Activated naive CD4-positive, alpha-beta T cell treated with anti-CD3 and anti-CD28 coated beads, Interleukin-2, amount 10 ng/mL, durations not matched to agents 7 days and 5 days (primary cell): ENCODE measurements at regions of chr6 and their contacts with region 1.

Region 1: DNA sequence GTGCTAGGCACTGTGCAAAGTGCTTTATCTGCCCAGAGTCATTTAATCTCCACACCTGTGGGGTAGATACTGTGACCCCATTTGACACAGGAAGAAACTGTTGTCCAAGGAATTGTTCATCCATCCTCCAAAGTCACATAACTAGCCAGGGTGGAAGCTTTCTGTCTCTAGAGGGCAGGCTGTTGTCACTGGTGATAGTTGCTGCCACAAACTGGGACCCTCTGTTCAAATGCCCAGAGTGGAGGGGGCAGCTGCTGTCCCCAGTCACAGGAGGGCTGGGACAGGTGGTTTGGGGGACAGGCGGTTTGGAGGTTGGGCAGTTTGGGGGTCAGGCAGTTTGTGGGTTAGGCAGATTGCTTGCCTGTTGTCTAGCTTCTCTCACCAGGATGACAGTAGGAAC is 16.1 kb upstream of the TMEM242 start:
- DNase-seq: no peak
- H3K4me3 Mint-ChIP-seq: no peak overlapping the region
- H3K27ac Mint-ChIP-seq: no peak overlapping the region
- H3K4me1 Mint-ChIP-seq: no peaks in the 10 kb centered on the region
- H3K27me3 Mint-ChIP-seq: peaks cover 59% of the 10 kb centered on the region

Region 2: GRCh38 chr6:157304899-157305663 is 34.4 kb before region 1 on chr6:
- CTCF ChIA-PET with region 1: no interaction called
- DNase-seq: no peak
- H3K4me3 Mint-ChIP-seq: no peak overlapping the region
- H3K27ac Mint-ChIP-seq: no peak overlapping the region
- H3K4me1 Mint-ChIP-seq: peaks cover 9% of the 10 kb centered on the region
- H3K27me3 Mint-ChIP-seq: no peaks in the 10 kb centered on the region

Region 3: DNA sequence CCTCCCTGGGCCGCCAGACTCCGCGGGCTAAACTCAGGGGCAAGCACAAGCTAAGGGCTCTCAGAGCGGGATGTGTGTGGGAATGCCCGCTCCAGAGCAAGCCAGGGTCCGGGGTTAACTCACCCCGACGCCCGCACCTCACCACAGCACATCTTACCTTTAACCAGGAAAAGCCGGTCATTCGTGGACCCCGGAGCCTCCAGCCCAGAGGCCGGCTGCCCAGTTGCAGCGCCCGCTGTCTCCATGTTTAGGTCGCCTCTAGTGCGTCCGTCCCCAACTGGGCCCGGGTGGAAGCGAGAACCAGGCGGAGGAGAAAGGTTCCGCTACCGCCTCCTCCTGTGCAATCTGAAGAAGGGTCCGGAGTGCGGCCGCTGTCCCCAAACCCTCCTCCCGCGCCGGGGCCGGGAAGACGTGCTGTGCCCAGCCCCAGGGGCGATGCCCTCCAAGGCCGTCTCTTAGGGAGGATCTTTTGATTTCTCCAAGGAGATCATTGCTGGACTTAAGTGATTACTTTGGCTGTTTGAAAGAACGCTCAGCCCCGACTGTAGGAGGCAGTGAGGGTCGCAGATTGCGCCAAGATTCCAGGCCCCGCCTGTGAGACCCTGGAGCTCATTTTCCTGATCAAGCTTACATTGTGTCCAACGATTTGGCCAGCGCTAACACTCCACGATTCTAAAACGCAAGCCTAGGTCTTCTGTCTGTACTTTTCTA is 16.0 kb before region 1 on chr6 and contains the start of gene TMEM242:
- CTCF ChIA-PET with region 1: interaction called, 53 read pairs
- DNase-seq: peak; percentile 90
- H3K4me3 Mint-ChIP-seq: peak within 1 kb of the TSS; percentile 95
- H3K27ac Mint-ChIP-seq: peak within 1 kb of the TSS; percentile 91
- H3K4me1 Mint-ChIP-seq: peaks cover 37% of the 10 kb centered on the region
- H3K27me3 Mint-ChIP-seq: peaks cover 50% of the 10 kb centered on the region

Region 4: GRCh38 chr6:157368359-157369049 is 29.1 kb after region 1 on chr6:
- CTCF ChIA-PET with region 1: no interaction called
- DNase-seq: no peak
- H3K4me3 Mint-ChIP-seq: no peak overlapping the region
- H3K27ac Mint-ChIP-seq: no peak overlapping the region
- H3K4me1 Mint-ChIP-seq: peaks cover 19% of the 10 kb centered on the region
- H3K27me3 Mint-ChIP-seq: peaks cover 62% of the 10 kb centered on the region

Region 5: GRCh38 chr6:157420497-157420896 is 81.1 kb after region 1 on chr6:
- CTCF ChIA-PET with region 1: no interaction called
- DNase-seq: no peak
- H3K4me3 Mint-ChIP-seq: no peak overlapping the region
- H3K27ac Mint-ChIP-seq: no peak overlapping the region
- H3K4me1 Mint-ChIP-seq: no peaks in the 10 kb centered on the region
- H3K27me3 Mint-ChIP-seq: peaks cover 3% of the 10 kb centered on the region